ENCODE measurements at regions of chr11 and their contacts with region 1.

Region 1: DNA sequence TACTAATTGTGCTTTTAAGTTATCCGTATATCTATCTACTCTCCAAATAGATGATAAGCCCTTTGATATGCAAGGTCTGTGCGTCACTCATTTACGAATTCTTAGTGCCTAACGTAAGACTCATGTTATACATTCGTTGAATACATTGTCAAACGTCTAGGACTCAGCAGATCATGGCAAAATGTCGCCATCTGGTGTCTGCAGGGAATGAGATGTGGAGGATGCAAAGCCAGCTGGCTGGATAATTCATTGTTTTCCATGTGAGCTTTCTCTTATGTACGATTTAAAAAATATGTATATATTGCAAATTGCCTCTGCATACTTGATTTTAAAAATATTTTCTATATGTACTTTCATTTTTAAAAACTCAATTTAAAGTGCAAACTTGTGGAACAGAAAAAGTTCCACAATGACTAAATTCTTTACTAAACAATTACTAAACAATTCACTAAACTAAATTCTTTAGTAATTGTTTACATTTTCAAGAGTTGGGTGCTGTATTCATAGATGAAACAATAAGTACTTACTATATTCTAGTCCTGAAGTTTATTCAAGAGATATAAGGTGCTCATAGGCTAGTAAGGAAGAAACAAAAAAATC is 33.8 kb downstream of the ZNF202 start:
- DNase-seq: peak; percentile 26
- H3K4me3 ChIP-seq: no peak overlapping the region
- CTCF ChIP-seq: peak; percentile 71

Region 2: GRCh38 chr11:123590296-123590912 is 117.3 kb before region 1 on chr11:
- CTCF ChIA-PET with region 1: interaction called, 271 read pairs
- POLR2A ChIA-PET with region 1: no interaction called
- DNase-seq: no peak
- H3K4me3 ChIP-seq: no peak overlapping the region
- CTCF ChIP-seq: no peak

Region 3: DNA sequence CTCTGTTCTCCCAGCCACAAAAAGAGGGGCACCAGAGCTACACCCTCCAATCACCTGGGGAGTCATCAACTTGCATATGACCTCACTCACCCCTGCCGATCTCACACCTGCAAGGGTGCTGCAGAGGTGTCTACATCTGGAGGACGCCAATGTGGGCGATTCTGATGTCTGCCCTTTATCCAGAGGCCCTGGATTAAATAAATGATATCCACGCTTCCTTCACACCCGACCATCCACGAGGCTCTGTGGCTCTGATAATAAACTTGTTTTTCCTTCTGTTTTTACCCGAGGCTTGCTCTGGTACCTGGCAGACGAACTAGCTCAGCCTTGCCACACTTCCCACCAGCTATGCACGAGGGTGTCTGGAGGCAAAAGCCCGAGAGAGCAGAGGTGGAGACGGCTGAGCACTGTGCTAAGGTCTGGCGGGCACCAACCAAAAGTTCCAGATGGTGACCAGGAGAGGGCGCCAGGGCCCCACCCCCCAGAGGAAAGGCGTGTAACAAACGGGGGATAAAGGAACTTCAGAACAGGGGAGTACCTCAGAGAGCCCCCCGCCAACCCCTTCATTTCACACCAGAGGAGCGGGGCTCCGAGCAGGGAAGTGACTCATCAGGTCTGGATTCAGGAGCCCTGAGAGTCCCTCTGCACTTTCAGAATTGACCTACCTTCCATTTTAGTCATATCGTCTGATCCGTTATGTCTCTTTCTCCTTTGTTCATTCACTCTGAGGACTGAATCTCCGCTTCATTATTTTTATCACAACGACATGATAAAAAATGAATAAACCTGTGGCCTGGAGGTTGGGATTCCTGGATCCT is 66.8 kb before region 1 on chr11:
- CTCF ChIA-PET with region 1: interaction called, 305 read pairs
- POLR2A ChIA-PET with region 1: no interaction called
- DNase-seq: no peak
- H3K4me3 ChIP-seq: no peak overlapping the region
- CTCF ChIP-seq: peak; percentile 84

Region 4: GRCh38 chr11:123682696-123683410 is 24.9 kb before region 1 on chr11:
- CTCF ChIA-PET with region 1: interaction called, 13 read pairs
- POLR2A ChIA-PET with region 1: no interaction called
- DNase-seq: no peak
- H3K4me3 ChIP-seq: no peak overlapping the region
- CTCF ChIP-seq: no peak

Region 5: DNA sequence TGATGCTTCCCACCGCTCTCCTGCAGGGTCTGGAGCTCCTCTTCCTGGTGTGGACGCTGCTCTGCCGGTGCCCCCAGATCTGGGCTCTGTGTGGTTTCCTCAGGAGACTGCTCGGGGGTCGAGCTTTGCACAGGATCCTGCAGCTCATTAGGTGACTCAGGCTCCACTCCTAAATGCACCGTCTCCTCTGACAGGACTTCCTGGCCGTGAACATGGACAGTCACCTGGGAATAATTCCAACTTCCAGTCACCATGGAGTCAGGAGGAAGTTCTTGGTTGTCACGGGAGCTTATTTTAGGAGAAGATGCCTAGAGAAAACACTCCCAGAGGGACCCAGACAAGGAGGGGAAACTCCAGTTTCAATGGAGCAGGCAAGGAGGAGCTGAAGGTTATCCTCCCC is 21.9 kb after region 1 on chr11:
- CTCF ChIA-PET with region 1: interaction called, 11 read pairs
- POLR2A ChIA-PET with region 1: no interaction called
- DNase-seq: no peak
- H3K4me3 ChIP-seq: no peak overlapping the region
- CTCF ChIP-seq: no peak